ENCODE measurements at regions of chr4 and their contacts with region 1.

Region 1: DNA sequence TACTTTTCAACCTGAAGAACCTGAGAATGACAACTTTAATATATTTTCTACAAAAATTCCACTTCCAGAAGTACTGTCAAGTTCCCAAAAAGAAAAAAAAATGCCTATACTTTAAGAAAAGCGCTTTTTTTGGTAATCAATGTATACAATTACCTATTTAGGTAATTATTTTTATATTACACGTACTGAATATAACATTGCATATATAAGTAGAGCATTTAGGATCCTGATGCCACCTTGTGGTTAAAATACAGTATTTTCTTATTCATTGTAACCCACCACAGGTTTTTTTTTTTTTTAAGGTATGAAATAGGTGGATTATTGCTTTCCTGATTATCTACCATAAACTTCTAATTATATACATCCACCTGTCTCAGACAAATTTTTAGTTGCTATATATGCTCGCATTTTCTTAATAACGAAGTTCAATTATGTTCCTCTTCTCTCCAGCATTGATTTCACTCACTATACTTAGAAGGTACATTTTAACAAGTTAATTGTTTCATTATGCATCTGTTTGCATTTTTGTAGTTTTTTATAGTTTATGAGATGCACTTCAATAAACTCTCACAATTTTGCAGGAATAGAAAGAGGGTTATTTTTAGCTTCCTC is 5.2 kb downstream of the MAP9 start:
- DNase-seq: no peak
- ATAC-seq: no peak
- H3K4me3 Mint-ChIP-seq: no peak overlapping the region
- H3K27ac Mint-ChIP-seq: no peak overlapping the region
- H3K4me1 Mint-ChIP-seq: peaks cover 11% of the 10 kb centered on the region
- H3K27me3 Mint-ChIP-seq: no peaks in the 10 kb centered on the region

Region 2: GRCh38 chr4:154807042-154807630 is 564.4 kb before region 1 on chr4:
- CTCF ChIA-PET with region 1: interaction called, 4 read pairs
- POLR2A ChIA-PET with region 1: no interaction called
- intact Hi-C with region 1: loop called (anchors 1 to 5 kb)
- DNase-seq: no peak
- ATAC-seq: no peak
- H3K4me3 Mint-ChIP-seq: no peak overlapping the region
- H3K27ac Mint-ChIP-seq: no peak overlapping the region
- H3K4me1 Mint-ChIP-seq: no peaks in the 10 kb centered on the region
- H3K27me3 Mint-ChIP-seq: peaks cover 3% of the 10 kb centered on the region

Region 3: DNA sequence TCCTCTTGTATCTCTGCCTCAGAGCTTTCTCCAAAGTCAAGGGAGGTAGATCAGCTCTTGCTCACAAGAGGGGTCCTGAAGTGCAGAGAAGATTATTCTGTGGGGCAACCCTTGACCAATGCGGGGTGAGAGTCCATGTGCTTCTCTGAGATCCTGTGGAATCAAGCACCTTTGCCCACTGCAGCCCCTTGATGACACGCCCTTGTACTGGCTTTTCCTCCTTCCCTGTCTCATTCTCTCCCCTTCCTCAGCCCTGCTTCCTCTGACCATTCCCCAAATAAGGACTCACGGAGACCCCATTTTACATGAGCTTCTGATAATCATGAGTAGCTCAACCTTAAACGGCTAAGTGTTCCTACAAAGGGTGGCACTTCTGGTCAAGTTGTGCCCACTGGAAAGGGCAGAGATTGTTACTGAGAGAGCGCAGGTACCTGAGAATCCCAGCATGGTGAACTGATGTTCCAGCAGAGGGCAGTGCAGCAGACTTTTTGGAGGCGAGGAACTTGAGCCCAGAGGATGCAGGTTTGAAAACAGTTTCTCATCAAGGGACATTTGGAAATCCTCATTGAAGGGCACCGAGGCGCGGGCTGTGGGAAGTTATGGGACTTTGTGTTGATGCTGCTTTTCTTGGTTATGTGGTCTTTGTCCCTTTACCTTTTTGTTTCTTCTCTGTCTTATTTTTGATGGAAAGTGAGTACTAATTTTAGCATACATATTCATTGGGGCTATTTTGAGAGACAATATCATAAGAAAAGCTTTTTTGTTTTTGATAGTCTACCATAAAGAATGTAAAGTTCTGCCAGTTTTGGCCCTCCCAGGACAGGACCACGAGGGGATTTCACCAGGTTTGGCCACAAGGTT is 389.1 kb before region 1 on chr4:
- CTCF ChIA-PET with region 1: interaction called, 5 read pairs
- POLR2A ChIA-PET with region 1: no interaction called
- intact Hi-C with region 1: loop called in 1 of 2 experiments (anchors 1 kb)
- DNase-seq: peak; percentile 71
- ATAC-seq: peak; percentile 49
- H3K4me3 Mint-ChIP-seq: no peak overlapping the region
- H3K27ac Mint-ChIP-seq: no peak overlapping the region
- H3K4me1 Mint-ChIP-seq: no peaks in the 10 kb centered on the region
- H3K27me3 Mint-ChIP-seq: peaks cover 2% of the 10 kb centered on the region

Region 4: DNA sequence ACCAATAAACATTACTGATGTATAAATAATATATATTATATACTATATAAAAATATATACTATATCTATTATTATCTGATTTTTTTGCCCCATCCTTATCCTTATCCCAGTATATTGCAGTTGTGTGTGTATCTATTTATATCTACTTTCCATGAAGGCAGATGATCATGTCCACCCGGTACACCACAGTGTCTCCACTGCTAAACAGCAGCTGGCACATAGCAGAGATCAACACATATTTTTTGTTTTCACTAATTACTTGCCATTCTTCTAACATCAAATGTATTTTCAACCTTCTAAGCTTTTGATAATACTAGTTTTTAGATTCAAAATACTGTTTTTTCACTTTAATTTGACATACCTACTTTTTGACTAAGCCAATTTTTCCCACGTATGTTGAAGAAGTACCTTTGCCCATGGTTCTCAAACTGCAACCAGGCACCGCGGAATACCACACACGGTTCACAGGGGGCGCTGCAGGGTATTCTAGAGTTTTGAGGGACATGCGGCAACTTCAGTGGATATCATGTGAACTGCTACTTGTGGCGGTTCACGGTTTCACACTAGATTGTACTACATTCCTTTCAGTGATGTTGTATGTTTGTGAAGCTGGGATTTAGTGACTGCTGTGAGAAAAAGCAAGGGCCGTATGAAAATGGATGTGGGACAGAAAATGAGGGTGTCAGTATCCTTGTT is 345.6 kb before region 1 on chr4:
- CTCF ChIA-PET with region 1: no interaction called
- POLR2A ChIA-PET with region 1: no interaction called
- intact Hi-C with region 1: loop called in 1 of 2 experiments (anchors 5 kb)
- DNase-seq: peak; percentile 59
- ATAC-seq: peak; percentile 64
- H3K4me3 Mint-ChIP-seq: no peak overlapping the region
- H3K27ac Mint-ChIP-seq: no peak overlapping the region
- H3K4me1 Mint-ChIP-seq: no peaks in the 10 kb centered on the region
- H3K27me3 Mint-ChIP-seq: peaks cover 8% of the 10 kb centered on the region

Region 5: GRCh38 chr4:155161357-155161756 is 210.2 kb before region 1 on chr4:
- CTCF ChIA-PET with region 1: no interaction called
- POLR2A ChIA-PET with region 1: no interaction called
- intact Hi-C with region 1: no loop called
- DNase-seq: no peak
- ATAC-seq: no peak
- H3K4me3 Mint-ChIP-seq: no peak overlapping the region
- H3K27ac Mint-ChIP-seq: no peak overlapping the region
- H3K4me1 Mint-ChIP-seq: no peaks in the 10 kb centered on the region
- H3K27me3 Mint-ChIP-seq: peaks cover 3% of the 10 kb centered on the region

Region 6: DNA sequence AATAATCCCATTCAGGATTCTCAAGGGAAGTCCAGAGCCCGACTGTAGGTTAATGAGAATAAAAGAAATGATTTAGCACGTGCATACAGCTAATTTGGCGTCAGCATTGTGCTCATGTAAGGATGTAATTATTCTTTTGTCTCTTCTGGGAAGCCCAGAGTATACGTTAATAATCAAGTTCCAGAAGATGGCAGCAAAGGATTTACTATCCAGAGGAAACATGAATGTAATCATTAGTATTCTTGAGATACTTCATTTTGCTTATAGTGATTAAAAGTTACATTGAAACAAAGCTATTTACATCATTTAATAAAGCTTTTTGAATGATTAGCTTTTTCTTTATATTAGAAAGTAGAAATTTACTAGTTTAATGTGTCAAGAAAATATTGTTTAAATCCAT is 32.3 kb after region 1 on chr4:
- CTCF ChIA-PET with region 1: no interaction called
- POLR2A ChIA-PET with region 1: no interaction called
- intact Hi-C with region 1: no loop called
- DNase-seq: no peak
- ATAC-seq: no peak
- H3K4me3 Mint-ChIP-seq: no peak overlapping the region
- H3K27ac Mint-ChIP-seq: no peak overlapping the region
- H3K4me1 Mint-ChIP-seq: no peaks in the 10 kb centered on the region
- H3K27me3 Mint-ChIP-seq: peaks cover 10% of the 10 kb centered on the region

Region 7: GRCh38 chr4:155522201-155522600 is 150.7 kb after region 1 on chr4:
- CTCF ChIA-PET with region 1: no interaction called
- POLR2A ChIA-PET with region 1: no interaction called
- intact Hi-C with region 1: no loop called
- DNase-seq: no peak
- ATAC-seq: no peak
- H3K4me3 Mint-ChIP-seq: no peak overlapping the region
- H3K27ac Mint-ChIP-seq: no peak overlapping the region
- H3K4me1 Mint-ChIP-seq: no peaks in the 10 kb centered on the region
- H3K27me3 Mint-ChIP-seq: peaks cover 3% of the 10 kb centered on the region

Measured in activated CD4-positive, alpha-beta T cell treated with anti-CD3 and anti-CD28 coated beads for 36 hours (primary cell).